ENCODE measurements at regions of chr19 and their contacts with region 1.

Region 1: DNA sequence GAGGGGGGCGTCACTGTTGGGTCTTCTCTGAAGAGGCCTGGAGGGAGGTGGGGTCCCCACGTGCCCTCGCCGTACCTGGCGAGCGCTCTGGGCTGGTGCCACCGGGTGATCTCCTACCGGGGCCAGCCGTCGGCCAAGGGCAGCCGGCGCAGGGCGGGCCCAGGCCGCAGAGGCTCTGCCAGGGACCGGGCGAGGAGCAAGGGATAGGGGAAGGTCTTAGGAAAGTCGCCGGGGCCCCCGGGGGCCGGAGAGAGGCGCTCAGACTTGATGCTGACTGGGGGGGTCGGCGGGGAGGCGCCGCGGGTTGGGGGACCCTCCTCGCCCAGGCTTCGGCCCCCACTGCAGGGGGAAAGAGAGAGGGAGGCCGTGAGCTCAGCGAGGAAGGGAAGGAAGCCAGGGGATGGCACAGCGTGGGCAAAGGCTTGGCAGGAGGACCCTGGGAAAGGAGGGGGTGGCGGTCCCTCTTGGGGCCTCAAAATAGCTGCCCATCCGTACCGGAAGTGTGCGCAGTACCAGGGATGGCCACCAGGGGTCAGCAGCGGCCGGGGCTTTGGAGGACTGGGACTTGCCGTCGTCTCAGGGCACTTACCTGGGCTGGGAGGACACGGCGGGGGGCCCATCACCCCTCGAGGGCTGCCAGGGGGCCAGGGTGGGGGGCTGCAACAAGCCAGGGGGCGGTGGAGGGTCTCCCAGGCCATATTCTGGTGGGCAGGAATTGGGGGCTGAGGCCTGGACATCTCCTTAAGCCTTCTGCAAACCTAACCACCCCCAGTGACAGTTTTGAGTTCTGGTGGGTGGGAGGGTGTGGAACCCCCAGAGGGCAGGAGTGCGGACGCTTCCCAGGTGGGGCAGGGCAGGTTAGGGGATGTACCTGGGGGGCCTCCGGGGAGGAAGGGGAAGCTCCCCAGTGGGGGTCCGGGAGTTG is 7.7 kb upstream of the TMEM161A start:
- DNase-seq: peak; percentile 92
- ATAC-seq: peak; percentile 77

Region 2: DNA sequence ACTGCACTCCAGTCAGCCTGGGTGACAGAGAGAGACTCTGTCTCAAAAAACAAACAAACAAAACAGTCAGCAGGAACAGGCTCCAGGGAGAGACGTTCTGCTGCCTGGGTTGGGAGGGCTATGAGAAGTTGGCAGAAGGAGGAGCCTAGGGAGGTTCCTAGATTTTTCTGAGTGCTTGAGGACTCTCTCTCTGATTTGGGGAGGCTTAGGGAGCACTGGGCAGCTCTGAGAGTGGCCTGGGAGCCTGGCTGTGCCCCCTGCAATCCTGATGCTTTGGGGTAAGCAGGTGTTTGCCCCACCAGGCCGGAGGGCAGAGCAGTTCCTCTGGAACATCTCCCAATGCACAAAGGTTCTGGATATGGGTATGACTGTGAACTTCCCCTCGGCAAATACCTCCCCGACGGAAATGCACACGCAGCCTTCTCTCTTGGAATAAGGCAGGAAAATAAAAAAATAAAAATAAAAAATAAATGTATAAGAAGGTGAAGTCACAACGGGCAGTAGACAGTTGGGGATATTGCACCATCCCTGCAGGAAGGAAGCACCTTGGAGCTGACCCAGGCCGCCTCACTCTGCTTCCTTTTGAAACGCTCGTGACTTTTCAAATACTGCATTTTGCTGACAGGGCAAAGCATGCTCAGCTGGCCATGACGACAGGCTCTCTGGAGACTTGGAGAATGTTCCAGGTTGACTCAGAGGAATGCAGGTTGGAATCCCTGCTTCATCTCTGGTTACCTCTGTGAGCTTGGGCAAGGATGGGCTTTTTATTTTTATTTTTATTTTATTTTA is 178.4 kb before region 1 on chr19:
- intact Hi-C with region 1: no loop called
- DNase-seq: peak; percentile 82
- ATAC-seq: peak; percentile 57

Region 3: GRCh38 chr19:19170053-19170872 is 24.3 kb after region 1 on chr19 and contains the start of gene MEF2B:
- intact Hi-C with region 1: loop called (anchors 2 kb)
- DNase-seq: peak; percentile 91
- ATAC-seq: peak; percentile 86
- total RNA-seq, gene MEF2B: 1.4 TPM

Region 4: DNA sequence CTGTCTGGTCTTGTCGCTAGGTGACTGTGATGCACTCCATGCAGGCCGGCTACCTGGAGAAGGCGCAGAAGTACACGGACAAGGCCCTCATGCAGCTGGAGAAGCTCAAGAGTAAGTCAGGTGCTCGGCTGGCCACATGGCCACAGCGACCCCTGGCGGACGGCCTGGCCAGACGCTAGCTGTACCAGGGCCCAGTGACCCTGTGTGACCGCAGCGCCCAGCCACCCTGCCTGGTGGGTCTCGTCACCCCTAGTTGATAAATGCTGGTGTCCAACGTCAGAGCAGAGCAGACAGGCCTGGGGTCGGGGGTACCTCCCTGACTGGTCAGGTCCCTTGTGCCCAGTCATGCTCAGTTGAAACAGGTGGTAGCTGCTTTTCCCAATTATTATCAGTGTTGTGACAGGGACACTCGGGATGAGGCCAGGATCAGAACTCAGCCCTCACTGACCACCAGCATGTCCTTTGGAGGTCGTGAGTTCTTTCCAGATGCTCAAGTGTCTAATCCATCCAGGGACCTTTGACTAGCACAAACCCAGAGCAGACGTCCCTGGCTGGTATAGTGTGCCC is 196.9 kb after region 1 on chr19:
- intact Hi-C with region 1: loop called (anchors 5 kb)
- DNase-seq: peak; percentile 84
- ATAC-seq: peak; percentile 74

Measured in Right ventricle myocardium inferior (tissue), 1 donor.